Heart left ventricle (tissue), 16 donors: ENCODE measurements at regions of chr1 and their contacts with region 1.

Region 1: DNA sequence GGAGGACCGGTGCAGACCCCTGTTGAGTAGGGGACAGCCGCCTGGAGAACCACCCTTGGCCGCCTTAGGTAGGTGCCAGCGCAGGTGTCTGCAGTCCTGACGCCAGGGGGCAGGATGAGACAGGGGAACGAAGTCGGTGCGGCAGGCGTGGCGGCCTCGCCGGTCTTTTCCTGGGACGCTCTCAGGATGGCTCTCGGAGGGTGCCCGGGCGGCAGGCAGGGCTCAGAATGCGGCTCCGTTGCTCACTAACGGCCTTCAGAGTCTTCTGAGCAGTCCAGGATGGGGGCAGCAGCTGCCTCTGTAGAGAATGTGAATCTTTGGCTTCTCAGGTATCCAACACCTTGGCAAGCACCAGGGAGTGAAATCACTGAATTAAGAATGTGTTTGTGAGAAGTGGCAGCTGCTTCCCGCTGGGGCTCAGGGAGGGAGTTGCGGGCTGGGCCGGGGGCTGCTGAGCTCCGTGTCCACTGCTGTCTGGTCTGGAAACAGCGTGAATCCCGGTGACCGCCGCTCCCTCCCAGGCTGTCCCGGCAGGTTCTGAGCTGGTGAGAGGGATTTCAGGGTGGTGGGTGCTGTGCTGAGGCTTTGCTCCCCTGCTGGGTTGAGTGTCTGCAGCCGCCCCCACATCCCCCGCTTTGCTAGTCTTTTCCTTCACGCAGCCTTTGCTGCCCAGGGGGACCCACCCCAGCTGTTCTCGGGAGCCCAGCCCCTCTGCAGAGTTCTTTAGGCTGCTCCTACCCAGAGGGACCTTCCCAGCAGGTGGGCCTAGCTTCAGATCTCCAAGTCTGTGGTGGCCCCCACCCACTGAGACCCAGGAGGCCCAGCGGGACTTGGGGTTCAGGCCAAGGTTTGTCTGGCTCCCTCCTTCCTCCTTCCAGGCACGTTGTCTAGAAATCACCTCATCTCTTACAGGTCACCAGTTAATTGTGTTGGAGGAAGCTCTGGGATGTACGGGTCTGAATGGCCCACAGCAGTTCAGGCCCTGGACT is 11.1 kb upstream of the C1orf174 start:
- DNase-seq: peak in 4 of 5 donors; percentile 62 to 83 (median 64)
- ATAC-seq: peak in 3 of 4 donors; percentile 66 to 83 (median 77)
- H3K4me3 ChIP-seq: no peak overlapping the region
- H3K27ac ChIP-seq: no peak overlapping the region
- H3K4me1 ChIP-seq: peaks cover 0 to 7% (median 0%) of the 10 kb centered on the region in 12 donors
- H3K27me3 ChIP-seq: peaks cover 0 to 46% (median 15%) of the 10 kb centered on the region in 9 donors
- CTCF ChIP-seq: peak; percentile 44 to 76 (median 62)
- POLR2A ChIP-seq: no peak

Region 2: GRCh38 chr1:3663999-3664699 is 247.0 kb before region 1 on chr1:
- intact Hi-C with region 1: no loop called
- DNase-seq: peak in 2 of 5 donors; percentile 9 to 20
- ATAC-seq: no peak
- H3K4me3 ChIP-seq: no peak overlapping the region
- H3K27ac ChIP-seq: no peak overlapping the region
- H3K4me1 ChIP-seq: peaks cover 0 to 9% (median 5%) of the 10 kb centered on the region in 12 donors
- H3K27me3 ChIP-seq: no peaks in the 10 kb centered on the region
- CTCF ChIP-seq: no peak
- POLR2A ChIP-seq: no peak

Region 3: GRCh38 chr1:3948364-3948763 is 37.2 kb after region 1 on chr1:
- intact Hi-C with region 1: no loop called
- DNase-seq: no peak
- ATAC-seq: no peak
- H3K4me3 ChIP-seq: no peak overlapping the region
- H3K27ac ChIP-seq: no peak overlapping the region
- H3K4me1 ChIP-seq: no peaks in the 10 kb centered on the region
- H3K27me3 ChIP-seq: peaks cover 0 to 82% (median 9%) of the 10 kb centered on the region in 9 donors
- CTCF ChIP-seq: no peak
- POLR2A ChIP-seq: no peak

Region 4: DNA sequence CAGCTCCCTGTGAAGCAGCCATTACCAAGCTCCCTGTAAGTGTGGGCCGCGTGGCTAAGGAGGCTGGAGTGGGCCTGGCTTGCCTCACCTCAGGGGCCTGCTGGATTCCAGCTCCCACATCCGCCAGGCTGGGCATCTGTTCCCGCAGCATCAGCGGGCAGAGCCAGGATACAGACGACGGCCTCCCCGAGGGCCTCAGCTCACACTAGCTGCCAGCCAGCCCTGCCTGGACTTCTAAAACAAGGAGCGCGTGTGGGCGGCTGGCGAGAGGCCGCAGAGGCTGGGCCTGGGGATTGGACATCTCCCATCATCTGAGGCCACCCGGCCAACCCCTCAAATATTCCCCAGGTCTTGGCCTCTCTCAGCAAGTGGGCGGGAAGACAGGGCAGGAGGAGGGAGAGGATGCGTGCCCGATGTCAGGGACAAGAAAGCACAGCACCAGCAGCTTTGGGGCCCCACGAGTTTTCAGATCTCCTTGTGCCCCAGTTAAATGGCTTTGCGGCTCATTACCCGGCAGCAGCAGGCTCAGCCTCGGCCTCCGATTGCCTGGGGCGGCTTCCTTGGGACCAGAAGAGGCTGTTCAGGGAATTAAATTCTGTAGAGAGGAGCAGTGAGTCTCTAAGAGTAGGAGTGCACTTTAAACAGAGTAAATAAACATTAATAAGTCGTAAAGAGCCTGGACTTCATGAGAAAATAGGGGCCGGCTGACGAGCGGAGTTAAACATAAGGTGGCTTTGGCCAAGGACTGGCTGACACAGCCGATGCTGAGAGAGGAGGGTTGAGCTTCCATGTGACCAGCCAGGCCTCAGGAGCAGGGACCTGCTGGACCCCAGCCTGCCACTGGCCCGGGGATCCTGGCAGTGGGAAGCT is 197.8 kb after region 1 on chr1:
- intact Hi-C with region 1: no loop called
- DNase-seq: no peak
- ATAC-seq: no peak
- H3K4me3 ChIP-seq: no peak overlapping the region
- H3K27ac ChIP-seq: no peak overlapping the region
- H3K4me1 ChIP-seq: no peaks in the 10 kb centered on the region
- H3K27me3 ChIP-seq: peaks cover 0 to 26% (median 0%) of the 10 kb centered on the region in 9 donors
- CTCF ChIP-seq: no peak
- POLR2A ChIP-seq: no peak

Region 5: GRCh38 chr1:4825800-4826450 is 914.8 kb after region 1 on chr1:
- intact Hi-C with region 1: loop called in 1 of 10 experiments (anchors 5 kb)
- DNase-seq: no peak
- ATAC-seq: peak in 1 of 4 donors; percentile 38
- H3K4me3 ChIP-seq: no peak overlapping the region
- H3K27ac ChIP-seq: no peak overlapping the region
- H3K4me1 ChIP-seq: no peaks in the 10 kb centered on the region
- H3K27me3 ChIP-seq: peaks cover 0 to 9% (median 0%) of the 10 kb centered on the region in 9 donors
- CTCF ChIP-seq: peak in 7 of 12 donors; percentile 17 to 43 (median 35)
- POLR2A ChIP-seq: no peak

Region 6: DNA sequence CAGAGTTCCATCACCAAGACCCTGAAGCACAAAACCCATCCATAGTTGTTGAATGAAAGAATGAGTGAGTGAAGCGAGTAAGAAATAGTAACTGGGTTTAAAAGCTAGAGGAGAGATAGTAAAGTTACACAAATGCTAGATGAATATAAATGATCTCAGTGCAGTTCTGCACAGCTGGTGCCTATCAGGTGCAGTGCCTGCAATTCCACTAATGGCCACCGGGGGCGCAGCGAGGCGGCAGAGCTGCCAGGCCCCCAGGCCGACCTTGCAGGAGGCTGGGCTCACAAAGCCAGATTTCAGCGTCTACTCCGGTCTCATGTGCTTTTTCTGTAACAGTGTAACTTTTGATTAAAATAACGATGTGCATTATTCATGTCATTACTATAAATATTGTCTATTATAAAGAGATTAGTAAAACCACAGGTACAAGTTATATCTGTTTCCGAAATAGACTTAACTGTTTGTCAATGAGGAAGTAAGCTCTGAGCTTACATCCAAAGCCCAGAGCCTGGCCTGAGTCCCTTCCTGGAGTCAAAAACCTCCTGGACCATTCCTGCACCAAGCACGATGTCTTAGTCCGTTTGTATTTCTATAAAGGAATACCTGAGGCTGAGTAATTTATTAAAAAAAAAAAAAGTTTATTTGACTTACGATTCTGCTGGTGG is 1603.5 kb after region 1 on chr1:
- intact Hi-C with region 1: loop called in 1 of 10 experiments (anchors 10 kb)
- DNase-seq: peak; percentile 45 to 82 (median 56)
- ATAC-seq: peak in 3 of 4 donors; percentile 64 to 73 (median 64)
- H3K4me3 ChIP-seq: no peak overlapping the region
- H3K27ac ChIP-seq: no peak overlapping the region
- H3K4me1 ChIP-seq: no peaks in the 10 kb centered on the region
- H3K27me3 ChIP-seq: peaks cover 0 to 38% (median 7%) of the 10 kb centered on the region in 9 donors
- CTCF ChIP-seq: peak; percentile 99 to 100 (median 100)
- POLR2A ChIP-seq: no peak

Region 7: DNA sequence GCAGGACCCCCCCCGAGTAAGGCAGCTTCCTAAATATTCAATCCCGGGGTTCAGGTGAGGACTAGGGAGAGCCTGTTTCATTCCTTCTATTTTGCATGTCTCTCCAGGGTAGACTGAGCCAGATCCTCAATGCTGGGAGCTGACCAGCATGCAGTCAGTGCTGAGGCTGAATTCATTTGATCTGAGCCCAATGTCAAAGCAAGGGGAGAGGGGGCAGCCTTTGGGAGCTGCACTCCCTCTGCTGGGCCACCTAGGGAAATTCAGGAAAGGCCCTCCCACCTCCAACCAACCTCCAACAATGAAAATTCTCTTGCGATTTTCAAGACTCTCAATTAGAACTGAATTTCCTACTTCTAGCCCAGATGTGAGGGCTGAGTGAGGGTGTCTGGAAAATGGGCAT is 1709.8 kb after region 1 on chr1:
- intact Hi-C with region 1: loop called in 1 of 10 experiments (anchors 5 kb)
- DNase-seq: no peak
- ATAC-seq: peak in 1 of 4 donors; percentile 32
- H3K4me3 ChIP-seq: no peak overlapping the region
- H3K27ac ChIP-seq: no peak overlapping the region
- H3K4me1 ChIP-seq: no peaks in the 10 kb centered on the region
- H3K27me3 ChIP-seq: peaks cover 0 to 39% (median 2%) of the 10 kb centered on the region in 9 donors
- CTCF ChIP-seq: peak in 8 of 12 donors; percentile 7 to 44 (median 30)
- POLR2A ChIP-seq: no peak